ENCODE measurements at regions of chr4 and their contacts with region 1.

Region 1: DNA sequence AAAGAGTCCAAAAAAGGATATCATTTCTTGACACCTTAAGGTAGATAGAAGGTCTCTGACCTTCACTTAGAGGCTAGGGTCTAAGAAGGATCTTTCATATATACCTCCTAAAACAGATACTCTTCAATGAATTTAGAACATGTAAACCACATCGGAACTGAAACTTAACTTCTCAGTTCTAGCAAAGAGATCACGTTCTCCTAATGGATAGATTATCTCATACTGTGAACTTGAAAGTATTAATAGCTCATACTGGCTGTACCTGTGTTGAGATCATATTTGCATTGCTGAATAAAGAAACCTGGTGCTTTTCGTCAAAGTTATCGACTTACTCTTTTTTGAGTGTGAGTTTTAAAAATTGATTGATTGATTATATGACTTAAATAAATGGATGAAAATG is 353.8 kb downstream of the EPHA5 start:
- DNase-seq: no peak
- ATAC-seq: no peak
- H3K4me3 ChIP-seq: no peak overlapping the region
- H3K27ac ChIP-seq: no peak overlapping the region
- H3K4me1 ChIP-seq: no peaks in the 10 kb centered on the region
- H3K27me3 ChIP-seq: no peaks in the 10 kb centered on the region
- CTCF ChIP-seq: no peak
- POLR2A ChIP-seq: no peak
- RAD21 ChIP-seq: no peak

Region 2: GRCh38 chr4:65259296-65259695 is 57.2 kb before region 1 on chr4:
- CTCF ChIA-PET with region 1: no interaction called
- POLR2A ChIA-PET with region 1: no interaction called
- RAD21 ChIA-PET with region 1: no interaction called
- intact Hi-C with region 1: loop called (anchors 10 kb)
- DNase-seq: no peak
- ATAC-seq: no peak
- H3K4me3 ChIP-seq: no peak overlapping the region
- H3K27ac ChIP-seq: no peak overlapping the region
- H3K4me1 ChIP-seq: no peaks in the 10 kb centered on the region
- H3K27me3 ChIP-seq: no peaks in the 10 kb centered on the region
- CTCF ChIP-seq: no peak
- POLR2A ChIP-seq: no peak
- RAD21 ChIP-seq: no peak